SK-N-SH (cell line): ENCODE measurements at regions of chr16 and their contacts with region 1.

Region 1: GRCh38 chr16:30793508-30794069 is 6.6 kb upstream of the ZNF629 start:
- DNase-seq: no peak
- H3K4me3 ChIP-seq: no peak overlapping the region
- H3K27ac ChIP-seq: no peak overlapping the region
- H3K4me1 ChIP-seq: no peaks in the 10 kb centered on the region
- H3K27me3 ChIP-seq: no peaks in the 10 kb centered on the region
- CTCF ChIP-seq: no peak
- EP300 ChIP-seq: no peak
- RAD21 ChIP-seq: no peak

Region 2: DNA sequence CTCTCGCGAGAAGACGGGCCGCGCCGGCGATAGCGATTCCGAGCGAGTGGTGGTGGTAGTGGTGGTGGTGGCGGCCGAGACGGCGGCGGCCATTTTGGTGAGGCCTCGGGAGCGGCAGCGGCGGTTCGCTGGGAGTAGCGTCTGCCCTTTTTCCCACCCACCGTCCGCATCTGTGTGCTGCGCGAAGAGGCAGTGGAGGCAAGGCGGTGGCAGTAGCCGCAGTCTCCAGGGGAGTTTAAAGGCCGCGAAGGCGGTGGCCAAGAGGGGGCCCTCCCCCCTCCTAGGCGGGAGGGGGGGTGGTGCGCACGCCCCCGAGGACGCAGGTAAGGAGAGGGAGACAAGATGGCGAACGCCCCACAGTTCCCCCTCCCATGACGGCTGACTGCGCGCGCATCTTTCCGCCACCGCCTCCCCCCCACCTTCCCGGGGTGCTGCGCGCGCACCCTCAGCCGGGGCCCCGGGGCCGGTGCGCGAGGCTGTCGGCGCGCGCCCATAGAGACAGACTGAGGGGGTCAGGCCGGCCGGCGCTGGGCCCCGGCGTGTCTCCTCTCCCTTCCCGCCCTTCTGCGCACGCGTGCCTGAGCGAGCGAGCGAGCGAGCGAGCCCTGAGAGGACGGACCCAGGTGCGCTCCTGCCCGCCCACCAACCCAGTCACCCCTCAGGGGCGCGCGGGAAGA is 95.3 kb before region 1 on chr16:
- CTCF ChIA-PET with region 1: no interaction called
- POLR2A ChIA-PET with region 1: no interaction called
- DNase-seq: peak; percentile 99
- H3K4me3 ChIP-seq: peak overlapping the region; percentile 78
- H3K27ac ChIP-seq: peak overlapping the region; percentile 99 to 100
- H3K4me1 ChIP-seq: peaks cover 12 to 15% of the 10 kb centered on the region in 2 experiments
- H3K27me3 ChIP-seq: no peaks in the 10 kb centered on the region
- CTCF ChIP-seq: no peak
- EP300 ChIP-seq: 0 out of 4 replicates have a peak, but pooled peaks of 1 of the 2 experiments have one; percentile 8
- RAD21 ChIP-seq: no peak

Region 3: DNA sequence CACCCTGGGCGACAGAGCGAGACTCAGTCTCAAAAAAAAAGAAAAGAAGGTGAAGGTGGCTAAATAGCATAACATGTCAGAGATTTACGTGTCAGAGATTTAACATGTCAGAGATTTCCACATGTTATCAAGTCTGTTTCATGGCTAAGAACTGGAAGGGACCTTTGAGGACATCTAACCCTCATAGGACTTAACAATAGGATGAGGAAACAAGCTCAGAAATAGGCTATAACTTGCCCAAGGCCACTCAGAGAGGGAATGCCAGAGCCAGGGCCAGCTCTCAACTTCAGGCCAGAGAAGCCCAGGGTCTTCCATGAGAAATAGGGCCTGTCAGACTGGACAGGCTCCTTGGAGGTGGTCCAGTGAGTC is 20.2 kb after region 1 on chr16:
- CTCF ChIA-PET with region 1: interaction called, 12 read pairs
- POLR2A ChIA-PET with region 1: no interaction called
- DNase-seq: no peak
- H3K4me3 ChIP-seq: peak overlapping the region; percentile 24 to 72; a peak in 3 of 4 replicates
- H3K27ac ChIP-seq: peak overlapping the region; percentile 24 to 69; a peak in 2 of 4 replicates
- H3K4me1 ChIP-seq: peaks cover 0 to 6% of the 10 kb centered on the region in 2 experiments; a peak in 1 of 4 replicates
- H3K27me3 ChIP-seq: no peaks in the 10 kb centered on the region
- CTCF ChIP-seq: no peak
- EP300 ChIP-seq: no peak
- RAD21 ChIP-seq: no peak